ENCODE measurements at regions of chr13 and their contacts with region 1.

Region 1: GRCh38 chr13:77516342-77516789 is 19.1 kb upstream of the SCEL start:
- DNase-seq: peak; percentile 31
- H3K4me3 Mint-ChIP-seq: no peak overlapping the region
- H3K27ac Mint-ChIP-seq: peak overlapping the region; percentile 16
- H3K4me1 Mint-ChIP-seq: peaks cover 8% of the 10 kb centered on the region
- H3K27me3 Mint-ChIP-seq: peaks cover 2% of the 10 kb centered on the region

Region 2: DNA sequence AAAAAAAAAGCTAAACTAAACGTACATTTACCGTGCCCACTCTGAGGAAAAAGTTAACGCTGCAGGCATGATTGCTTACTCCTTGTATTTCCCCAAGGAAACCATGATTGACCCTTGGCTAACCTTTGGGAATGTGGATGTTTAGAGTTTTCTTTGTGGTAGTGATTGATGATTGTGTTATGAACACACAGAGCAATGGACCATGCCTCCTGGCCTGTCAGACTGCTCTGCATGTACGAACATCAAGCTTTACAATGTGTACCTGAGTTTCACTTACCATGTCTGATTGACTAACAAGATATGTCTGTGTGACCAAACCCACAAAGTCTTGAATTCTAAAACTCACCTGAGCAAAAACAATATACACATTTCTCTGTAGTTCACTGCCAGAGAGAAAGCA is 224.6 kb before region 1 on chr13:
- CTCF ChIA-PET with region 1: no interaction called
- POLR2A ChIA-PET with region 1: no interaction called
- intact Hi-C with region 1: no loop called
- DNase-seq: no peak
- H3K4me3 Mint-ChIP-seq: no peak overlapping the region
- H3K27ac Mint-ChIP-seq: peak overlapping the region; percentile 42
- H3K4me1 Mint-ChIP-seq: peaks cover 39% of the 10 kb centered on the region
- H3K27me3 Mint-ChIP-seq: no peaks in the 10 kb centered on the region

Region 3: DNA sequence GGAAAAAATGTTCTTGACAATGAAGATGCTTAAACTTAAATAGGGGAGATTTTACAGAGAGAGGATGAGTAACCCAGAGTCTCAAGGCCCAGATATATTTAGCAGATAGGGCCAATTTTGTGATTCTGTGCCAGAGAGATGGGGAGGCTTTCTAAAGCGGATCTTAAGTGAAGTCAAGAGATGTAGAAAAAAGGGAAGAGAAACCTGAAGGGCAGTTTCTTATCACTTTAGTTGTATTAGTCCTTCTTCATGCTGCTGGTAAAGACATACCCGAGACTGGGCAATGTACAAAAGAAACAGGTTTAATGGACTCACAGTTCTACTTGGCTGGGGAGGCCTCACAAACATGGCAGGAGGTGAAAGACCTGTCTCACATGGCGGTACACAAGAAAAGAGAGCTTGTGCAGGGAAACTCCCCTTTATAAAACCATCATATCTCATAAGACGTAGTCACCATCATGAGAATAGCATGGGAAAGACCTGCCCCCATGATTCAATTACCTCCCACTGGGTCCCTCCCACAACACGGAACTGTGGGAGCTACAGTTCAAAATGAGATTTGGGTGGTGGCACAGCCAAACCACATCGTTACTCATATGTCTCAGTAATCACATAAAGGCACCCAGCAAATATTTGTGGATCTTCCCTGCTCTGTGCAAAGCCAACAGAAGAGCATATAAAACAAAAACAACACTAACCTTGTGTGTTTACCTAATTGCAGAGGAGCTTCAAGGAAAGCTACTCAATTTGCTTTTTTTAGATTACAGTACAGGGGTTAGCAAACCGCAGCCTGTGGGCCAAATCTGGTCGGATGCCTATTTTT is 86.8 kb before region 1 on chr13:
- CTCF ChIA-PET with region 1: no interaction called
- POLR2A ChIA-PET with region 1: no interaction called
- intact Hi-C with region 1: loop called (anchors 2 kb)
- DNase-seq: peak; percentile 80
- H3K4me3 Mint-ChIP-seq: peak overlapping the region; percentile 7
- H3K27ac Mint-ChIP-seq: peak overlapping the region; percentile 77
- H3K4me1 Mint-ChIP-seq: peaks cover 17% of the 10 kb centered on the region
- H3K27me3 Mint-ChIP-seq: no peaks in the 10 kb centered on the region

Region 4: DNA sequence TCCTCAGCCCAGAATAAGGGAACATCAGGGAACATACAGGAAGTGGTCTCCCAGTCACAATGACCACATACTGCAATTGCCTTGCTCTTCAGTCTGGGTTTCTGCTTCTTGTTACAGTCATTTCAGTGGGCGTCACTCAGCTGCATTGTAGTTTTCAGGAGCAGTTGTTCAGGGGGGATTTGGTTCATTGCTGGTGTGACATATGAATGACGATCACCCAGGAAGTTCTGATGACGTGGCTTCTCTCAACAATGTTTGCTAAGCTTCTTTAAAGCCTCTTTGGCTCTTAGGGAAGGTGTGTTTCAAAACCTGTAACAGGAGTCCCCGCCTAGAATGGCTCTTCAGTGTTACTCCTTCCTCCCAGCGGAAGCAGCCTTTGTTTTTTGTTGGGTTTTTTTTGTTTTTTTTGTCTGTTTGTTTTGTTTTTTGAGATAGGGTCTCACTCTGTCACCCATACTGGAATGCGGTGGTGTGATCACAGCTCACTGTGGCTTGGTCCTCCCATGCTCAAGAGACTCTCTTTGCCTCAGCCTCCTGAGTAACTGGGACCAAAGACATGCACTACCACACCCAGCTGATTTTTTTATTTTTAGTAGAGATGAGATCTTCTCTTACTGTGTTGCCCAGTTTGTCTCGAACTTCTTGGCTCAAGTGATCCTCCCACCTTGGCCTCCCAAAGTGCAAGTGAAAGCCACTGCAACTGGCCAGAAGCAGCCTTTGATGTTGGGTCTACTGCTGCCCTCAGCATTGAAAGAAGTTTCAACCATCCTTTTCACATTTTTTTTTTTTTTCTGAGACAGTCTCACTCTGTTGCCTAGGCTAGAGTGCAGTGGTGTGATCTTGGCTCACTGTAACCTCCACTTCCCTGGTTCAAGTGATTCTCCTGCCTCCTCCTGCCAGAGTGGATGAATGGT is 17.8 kb after region 1 on chr13:
- CTCF ChIA-PET with region 1: no interaction called
- POLR2A ChIA-PET with region 1: no interaction called
- intact Hi-C with region 1: loop called (anchors 2 kb)
- DNase-seq: no peak
- H3K4me3 Mint-ChIP-seq: no peak overlapping the region
- H3K27ac Mint-ChIP-seq: no peak overlapping the region
- H3K4me1 Mint-ChIP-seq: no peaks in the 10 kb centered on the region
- H3K27me3 Mint-ChIP-seq: peaks cover 1% of the 10 kb centered on the region

Region 5: DNA sequence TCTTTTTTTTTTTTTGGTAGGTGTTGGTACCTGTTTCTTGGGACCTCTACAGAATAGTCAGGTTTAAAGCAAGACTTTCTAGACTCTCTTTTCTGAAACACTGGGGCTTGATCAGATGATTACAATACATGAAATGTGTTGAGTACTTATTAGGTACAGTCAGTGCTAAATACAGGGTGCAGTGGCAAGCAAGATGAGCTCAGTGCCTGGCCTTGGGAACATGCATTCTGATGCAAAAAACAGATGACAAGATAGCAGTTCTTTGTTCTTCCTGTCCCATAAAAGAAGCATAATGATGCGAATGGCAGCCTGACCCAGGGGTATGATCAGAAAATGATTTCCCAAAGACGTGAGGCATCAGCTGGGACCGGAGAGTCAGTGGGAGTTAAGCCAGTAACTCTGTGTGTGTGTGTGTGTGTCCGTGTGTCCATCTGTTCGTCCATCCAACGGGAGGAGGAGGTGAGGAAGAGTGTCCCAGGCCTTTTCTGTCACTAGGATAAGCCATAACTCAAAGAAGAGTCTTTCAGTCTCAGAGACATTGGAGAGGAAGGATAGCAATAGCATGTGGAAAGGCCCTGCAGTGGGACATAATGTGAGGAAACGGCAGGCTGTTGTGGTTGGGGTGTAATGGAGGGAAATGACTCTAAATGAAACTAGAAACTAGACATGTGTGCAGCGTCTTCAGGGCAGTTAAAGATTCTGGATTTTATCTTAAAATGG is 213.3 kb after region 1 on chr13:
- CTCF ChIA-PET with region 1: no interaction called
- POLR2A ChIA-PET with region 1: no interaction called
- intact Hi-C with region 1: loop called (anchors 10 kb)
- DNase-seq: peak; percentile 66
- H3K4me3 Mint-ChIP-seq: peak overlapping the region; percentile 32
- H3K27ac Mint-ChIP-seq: peak overlapping the region; percentile 70
- H3K4me1 Mint-ChIP-seq: peaks cover 39% of the 10 kb centered on the region
- H3K27me3 Mint-ChIP-seq: no peaks in the 10 kb centered on the region